ENCODE measurements at regions of chr11 and their contacts with region 1.

Region 1: GRCh38 chr11:117426269-117426685 is 98.6 kb downstream of the CEP164 start:
- DNase-seq: peak; percentile 57 to 99
- H3K4me3 ChIP-seq: no peak overlapping the region; a peak in 2 of 8 replicates
- H3K27ac ChIP-seq: no peak overlapping the region
- H3K4me1 ChIP-seq: peaks cover 0 to 7% (median 4%) of the 10 kb centered on the region in 4 experiments; a peak in 6 of 7 replicates
- H3K27me3 ChIP-seq: no peaks in the 10 kb centered on the region; a peak in 1 of 7 replicates
- CTCF ChIP-seq: peak; percentile 93 to 99 (median 97)
- EP300 ChIP-seq: no peak
- POLR2A ChIP-seq: no peak
- RAD21 ChIP-seq: peak; percentile 96 to 98

Region 2: DNA sequence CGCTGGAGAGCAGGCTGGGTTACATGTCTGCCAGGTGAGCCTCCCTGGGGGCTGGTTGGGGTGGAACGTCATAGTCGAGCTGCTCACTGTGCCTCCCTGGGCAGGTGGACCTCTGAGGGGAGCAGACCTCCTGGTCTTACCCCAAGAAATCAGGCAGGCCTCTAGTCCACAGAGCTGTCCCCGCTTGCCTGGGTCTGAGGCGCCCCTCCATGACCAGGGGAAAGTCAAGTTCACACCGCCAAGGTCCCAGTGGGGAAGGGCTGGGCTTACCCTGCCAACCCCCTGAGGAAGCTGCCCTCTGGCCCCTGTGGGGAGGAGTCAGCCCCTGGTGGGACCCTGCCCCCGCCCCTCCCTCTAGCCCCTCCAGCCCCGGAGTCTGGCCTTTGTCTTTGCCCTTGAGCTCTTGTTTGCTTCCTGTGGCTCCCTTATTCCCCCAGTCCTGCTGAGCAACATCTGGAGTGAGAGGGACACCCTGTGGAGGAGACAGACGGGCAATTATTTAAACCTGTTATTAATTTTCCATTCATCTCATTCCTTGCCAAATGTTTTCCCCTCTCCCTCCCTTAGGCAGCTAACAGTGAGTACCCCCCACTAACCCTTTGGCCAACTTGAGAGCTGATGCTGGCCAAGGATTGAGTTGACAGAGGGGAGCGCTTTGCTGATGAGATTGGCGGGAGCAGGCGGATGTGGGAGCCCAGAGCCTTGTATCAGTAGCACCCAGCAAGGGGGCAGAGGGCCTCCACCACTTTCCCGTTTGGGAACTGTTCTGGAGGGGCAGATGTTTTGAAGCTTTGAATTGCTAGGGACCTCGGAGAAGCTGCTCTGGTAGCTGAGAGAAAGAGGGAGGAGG is 15.2 kb before region 1 on chr11:
- CTCF ChIA-PET with region 1: interaction called, 85 read pairs
- POLR2A ChIA-PET with region 1: no interaction called
- DNase-seq: no peak
- H3K4me3 ChIP-seq: no peak overlapping the region
- H3K27ac ChIP-seq: no peak overlapping the region
- H3K4me1 ChIP-seq: peaks cover 0 to 4% (median 0%) of the 10 kb centered on the region in 4 experiments; a peak in 2 of 7 replicates
- H3K27me3 ChIP-seq: no peaks in the 10 kb centered on the region
- CTCF ChIP-seq: no peak
- EP300 ChIP-seq: no peak
- POLR2A ChIP-seq: no peak
- RAD21 ChIP-seq: no peak

Region 3: DNA sequence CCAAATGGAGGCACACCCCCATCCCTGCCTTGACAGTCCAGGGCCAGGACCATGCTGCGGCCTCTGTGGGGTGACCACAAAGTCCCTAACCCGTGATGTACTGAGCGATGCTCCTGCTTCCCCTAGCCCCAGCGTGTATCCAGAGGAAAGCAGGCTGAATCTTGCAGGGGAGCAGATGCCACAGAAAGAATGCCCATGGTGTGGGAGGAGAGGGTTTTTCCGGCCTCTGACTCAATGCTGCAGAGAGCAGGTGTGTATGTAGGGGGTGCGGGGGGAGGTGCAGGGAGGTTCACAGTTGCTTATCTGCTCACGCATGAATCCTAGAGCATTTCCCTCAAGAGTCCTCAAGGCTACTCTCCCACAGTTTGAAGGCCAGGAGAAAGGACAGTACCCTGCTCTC is 32.0 kb after region 1 on chr11:
- CTCF ChIA-PET with region 1: interaction called, 10 read pairs
- POLR2A ChIA-PET with region 1: no interaction called
- DNase-seq: no peak
- H3K4me3 ChIP-seq: no peak overlapping the region
- H3K27ac ChIP-seq: no peak overlapping the region
- H3K4me1 ChIP-seq: no peaks in the 10 kb centered on the region
- H3K27me3 ChIP-seq: no peaks in the 10 kb centered on the region
- CTCF ChIP-seq: no peak
- EP300 ChIP-seq: no peak
- POLR2A ChIP-seq: no peak
- RAD21 ChIP-seq: no peak

Region 4: GRCh38 chr11:117497206-117497951 is 71.1 kb after region 1 on chr11:
- CTCF ChIA-PET with region 1: interaction called, 17 read pairs
- POLR2A ChIA-PET with region 1: no interaction called
- DNase-seq: no peak
- H3K4me3 ChIP-seq: no peak overlapping the region
- H3K27ac ChIP-seq: no peak overlapping the region
- H3K4me1 ChIP-seq: peaks cover 2 to 17% (median 11%) of the 10 kb centered on the region in 4 experiments
- H3K27me3 ChIP-seq: peaks cover 0 to 5% (median 1%) of the 10 kb centered on the region in 4 experiments; a peak in 3 of 7 replicates
- CTCF ChIP-seq: no peak
- EP300 ChIP-seq: no peak
- POLR2A ChIP-seq: no peak
- RAD21 ChIP-seq: no peak

Region 5: DNA sequence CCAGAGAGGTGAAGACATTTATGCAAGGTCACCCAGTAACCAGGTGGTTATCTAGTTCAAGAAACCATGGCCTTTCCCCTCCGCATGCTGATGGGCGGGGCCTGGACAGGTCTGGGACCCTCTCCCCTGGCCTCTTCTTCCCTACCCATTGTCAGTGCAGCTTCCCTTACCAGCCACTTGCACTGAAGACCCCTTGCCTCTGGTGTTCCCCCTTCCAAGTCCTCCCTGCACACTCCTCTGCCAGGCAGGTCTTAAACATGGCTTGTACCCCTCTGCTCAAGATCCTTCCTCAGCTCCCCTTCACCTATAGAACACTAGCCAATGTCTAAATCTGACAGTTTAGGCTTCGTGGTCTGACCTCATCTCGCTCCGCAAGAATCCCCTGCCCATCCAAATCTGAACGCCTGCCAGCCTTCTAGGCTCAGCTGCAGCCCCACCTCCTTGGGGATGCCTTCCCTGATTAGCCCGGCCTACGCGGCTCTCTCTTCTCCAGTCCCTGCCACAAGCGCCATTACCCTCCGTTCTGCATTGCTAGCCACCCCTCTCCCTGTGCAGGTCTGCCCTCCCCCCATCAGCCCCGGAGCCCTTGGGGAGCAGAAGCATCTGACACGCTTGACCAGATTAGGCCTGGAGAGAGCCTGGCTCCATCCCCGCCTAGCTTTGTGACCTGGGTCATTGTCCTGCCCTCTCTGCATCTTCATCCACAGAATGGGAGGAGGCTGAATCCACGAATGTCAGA is 157.0 kb after region 1 on chr11:
- CTCF ChIA-PET with region 1: interaction called, 17 read pairs
- POLR2A ChIA-PET with region 1: no interaction called
- DNase-seq: no peak
- H3K4me3 ChIP-seq: peak overlapping the region in 2 of 4 experiments; percentile 0 to 29; a peak in 1 of 8 replicates
- H3K27ac ChIP-seq: no peak overlapping the region
- H3K4me1 ChIP-seq: peaks cover 11 to 25% (median 13%) of the 10 kb centered on the region in 4 experiments
- H3K27me3 ChIP-seq: peaks cover 0 to 3% (median 3%) of the 10 kb centered on the region in 4 experiments; a peak in 1 of 7 replicates
- CTCF ChIP-seq: no peak
- EP300 ChIP-seq: no peak
- POLR2A ChIP-seq: no peak
- RAD21 ChIP-seq: no peak

Region 6: GRCh38 chr11:117634756-117635603 is 208.7 kb after region 1 on chr11:
- CTCF ChIA-PET with region 1: interaction called, 12 read pairs
- POLR2A ChIA-PET with region 1: no interaction called
- DNase-seq: no peak
- H3K4me3 ChIP-seq: no peak overlapping the region
- H3K27ac ChIP-seq: no peak overlapping the region
- H3K4me1 ChIP-seq: peaks cover 0 to 3% (median 2%) of the 10 kb centered on the region in 4 experiments; a peak in 4 of 7 replicates
- H3K27me3 ChIP-seq: no peaks in the 10 kb centered on the region; a peak in 1 of 7 replicates
- CTCF ChIP-seq: no peak
- EP300 ChIP-seq: no peak
- POLR2A ChIP-seq: no peak
- RAD21 ChIP-seq: no peak

Region 7: GRCh38 chr11:117817368-117818040 is 391.2 kb after region 1 on chr11:
- CTCF ChIA-PET with region 1: interaction called, 72 read pairs
- POLR2A ChIA-PET with region 1: interaction called, 3 read pairs
- DNase-seq: peak; percentile 70 to 97
- H3K4me3 ChIP-seq: peak overlapping the region in 3 of 4 experiments; percentile 10 to 46 (median 29); a peak in 4 of 8 replicates
- H3K27ac ChIP-seq: no peak overlapping the region
- H3K4me1 ChIP-seq: peaks cover 0 to 31% (median 20%) of the 10 kb centered on the region in 4 experiments; a peak in 6 of 7 replicates
- H3K27me3 ChIP-seq: no peaks in the 10 kb centered on the region; a peak in 1 of 7 replicates
- CTCF ChIP-seq: peak in 2 of 3 experiments; percentile 87 to 96; a peak in 3 of 4 replicates
- EP300 ChIP-seq: no peak
- POLR2A ChIP-seq: no peak
- RAD21 ChIP-seq: peak; percentile 85 to 88